ENCODE measurements at regions of chr11 and their contacts with region 1.

Region 1: DNA sequence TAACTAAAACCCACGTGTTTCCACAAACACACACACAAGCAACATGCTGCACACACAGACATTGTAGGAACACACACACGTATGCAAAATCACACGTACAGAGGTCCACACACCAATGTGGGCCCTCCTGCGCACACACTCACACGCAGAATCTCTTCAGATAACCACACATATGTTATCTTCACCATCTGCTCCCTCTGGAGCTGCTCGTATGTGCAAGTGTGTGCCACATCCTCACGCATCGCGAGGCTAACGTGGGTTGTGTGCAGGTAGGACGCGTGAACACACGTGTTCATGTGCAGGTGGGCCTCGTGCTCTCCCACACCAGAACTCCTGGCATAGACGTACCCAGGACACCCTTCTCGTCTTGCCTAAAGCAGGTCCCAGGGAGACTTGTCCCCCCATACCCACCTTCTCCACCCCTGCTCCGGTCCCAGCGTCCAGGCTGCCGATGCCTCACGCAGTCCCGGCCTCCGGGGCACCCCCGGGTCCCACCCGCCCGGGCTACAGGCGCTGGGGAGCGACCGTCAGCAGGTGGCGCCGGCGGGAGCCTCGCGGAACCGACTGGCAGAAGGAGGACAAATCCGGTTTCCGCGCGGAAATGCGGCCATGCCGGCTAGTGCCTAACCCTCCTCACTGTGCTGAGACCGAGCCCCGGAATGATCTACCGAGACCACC is 10.3 kb upstream of the IGSF9B start:
- DNase-seq: peak; percentile 49 to 71 (median 61)
- ATAC-seq: peak; percentile 77
- H3K4me3 ChIP-seq: peak overlapping the region; percentile 59
- H3K4me3 Mint-ChIP-seq: peak overlapping the region; percentile 81 to 93 (median 88)
- H3K27ac ChIP-seq: peak overlapping the region; percentile 36
- H3K27ac Mint-ChIP-seq: peak overlapping the region in 8 of 9 donors; percentile 20 to 93 (median 78)
- H3K4me1 ChIP-seq: no peaks in the 10 kb centered on the region
- H3K4me1 Mint-ChIP-seq: peaks cover 5 to 18% (median 13%) of the 10 kb centered on the region in 7 donors
- H3K27me3 ChIP-seq: no peaks in the 10 kb centered on the region
- H3K27me3 Mint-ChIP-seq: peaks cover 0 to 51% (median 5%) of the 10 kb centered on the region in 5 donors

Region 2: GRCh38 chr11:133956650-133957633 is 10.1 kb before region 1 on chr11 and contains the start of gene IGSF9B:
- CTCF ChIA-PET with region 1: no interaction called
- POLR2A ChIA-PET with region 1: no interaction called
- intact Hi-C with region 1: loop called in 1 of 2 experiments (anchors 1 kb)
- DNase-seq: peak; percentile 87 to 97 (median 92)
- ATAC-seq: peak; percentile 97
- H3K4me3 ChIP-seq: peak within 1 kb of the TSS; percentile 99
- H3K4me3 Mint-ChIP-seq: peak within 1 kb of the TSS; percentile 89 to 96 (median 92)
- H3K27ac ChIP-seq: peak within 1 kb of the TSS; percentile 75
- H3K27ac Mint-ChIP-seq: peak within 1 kb of the TSS; percentile 48 to 91 (median 88)
- H3K4me1 ChIP-seq: peaks cover 11 to 27% of the 10 kb centered on the region in 2 donors
- H3K4me1 Mint-ChIP-seq: peaks cover 29 to 52% (median 43%) of the 10 kb centered on the region in 7 donors
- H3K27me3 ChIP-seq: no peaks in the 10 kb centered on the region
- H3K27me3 Mint-ChIP-seq: peaks cover 7 to 24% (median 16%) of the 10 kb centered on the region in 5 donors
- total RNA-seq, gene IGSF9B: 17.6 to 155 (median 24.1) TPM

Region 3: GRCh38 chr11:134033696-134034491 is 66.8 kb after region 1 on chr11:
- CTCF ChIA-PET with region 1: interaction called, 4 read pairs
- POLR2A ChIA-PET with region 1: interaction called, 3 read pairs
- intact Hi-C with region 1: loop called in 1 of 2 experiments (anchors 1 kb)
- DNase-seq: peak in 8 of 9 donors; percentile 38 to 74 (median 60)
- ATAC-seq: peak; percentile 77
- H3K4me3 ChIP-seq: peak overlapping the region; percentile 25
- H3K4me3 Mint-ChIP-seq: peak overlapping the region; percentile 63 to 95 (median 75)
- H3K27ac ChIP-seq: peak overlapping the region; percentile 67
- H3K27ac Mint-ChIP-seq: peak overlapping the region; percentile 74 to 98 (median 85)
- H3K4me1 ChIP-seq: peaks cover 29 to 46% of the 10 kb centered on the region in 2 donors
- H3K4me1 Mint-ChIP-seq: peaks cover 33 to 79% (median 65%) of the 10 kb centered on the region in 7 donors
- H3K27me3 ChIP-seq: no peaks in the 10 kb centered on the region
- H3K27me3 Mint-ChIP-seq: peaks cover 0 to 24% (median 0%) of the 10 kb centered on the region in 5 donors

Region 4: DNA sequence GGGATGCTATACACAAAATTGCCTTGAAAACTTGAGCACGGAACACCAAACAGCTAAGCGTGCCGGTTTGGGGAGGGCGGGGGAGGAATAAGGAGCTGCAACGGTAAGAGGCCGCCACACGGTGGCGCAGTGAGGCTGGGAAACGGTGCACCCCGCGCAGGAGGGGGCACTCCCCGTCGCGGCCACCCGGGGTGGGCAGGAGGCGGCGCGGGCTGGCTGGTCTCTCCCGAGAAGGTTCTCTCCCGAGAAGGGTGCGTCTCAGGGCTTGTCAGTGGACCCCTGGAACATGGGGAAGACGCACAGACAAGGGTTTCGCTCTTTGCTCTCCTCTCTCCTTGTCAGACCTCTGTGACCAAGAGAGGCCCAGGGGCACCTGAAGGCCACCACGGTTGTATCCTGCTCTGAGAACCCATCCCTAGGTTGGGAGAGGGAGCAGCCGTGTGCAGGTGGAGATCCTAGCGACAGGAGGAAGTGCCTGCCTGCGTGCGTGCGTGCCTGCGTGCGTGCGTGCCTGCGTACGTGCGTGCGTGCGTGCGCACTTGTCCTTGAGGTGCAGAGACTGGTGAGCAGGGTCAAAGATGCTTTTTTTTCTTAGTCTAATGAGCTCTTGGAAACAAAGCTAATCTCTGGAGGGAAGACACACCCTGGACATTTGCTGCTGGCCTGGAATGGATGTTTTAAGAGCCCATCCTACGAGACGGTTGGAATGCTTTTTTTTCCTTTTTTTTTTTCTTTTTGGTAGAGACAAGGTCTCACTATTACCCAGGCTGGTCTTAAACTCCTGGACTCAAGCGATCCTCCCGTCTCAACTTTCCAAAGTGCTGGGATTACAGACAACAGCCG is 83.7 kb after region 1 on chr11:
- CTCF ChIA-PET with region 1: interaction called, 3 read pairs
- POLR2A ChIA-PET with region 1: no interaction called
- intact Hi-C with region 1: loop called (anchors 1 kb)
- DNase-seq: peak; percentile 60 to 82 (median 71)
- ATAC-seq: peak; percentile 96
- H3K4me3 ChIP-seq: no peak overlapping the region
- H3K4me3 Mint-ChIP-seq: peak overlapping the region in 5 of 10 donors; percentile 13 to 51 (median 48)
- H3K27ac ChIP-seq: no peak overlapping the region
- H3K27ac Mint-ChIP-seq: peak overlapping the region in 3 of 9 donors; percentile 44 to 86 (median 70)
- H3K4me1 ChIP-seq: peaks cover 4% of the 10 kb centered on the region in 2 donors
- H3K4me1 Mint-ChIP-seq: peaks cover 0 to 14% (median 5%) of the 10 kb centered on the region in 7 donors
- H3K27me3 ChIP-seq: peaks cover 0 to 3% of the 10 kb centered on the region in 2 donors
- H3K27me3 Mint-ChIP-seq: peaks cover 14 to 26% (median 21%) of the 10 kb centered on the region in 5 donors

Region 5: DNA sequence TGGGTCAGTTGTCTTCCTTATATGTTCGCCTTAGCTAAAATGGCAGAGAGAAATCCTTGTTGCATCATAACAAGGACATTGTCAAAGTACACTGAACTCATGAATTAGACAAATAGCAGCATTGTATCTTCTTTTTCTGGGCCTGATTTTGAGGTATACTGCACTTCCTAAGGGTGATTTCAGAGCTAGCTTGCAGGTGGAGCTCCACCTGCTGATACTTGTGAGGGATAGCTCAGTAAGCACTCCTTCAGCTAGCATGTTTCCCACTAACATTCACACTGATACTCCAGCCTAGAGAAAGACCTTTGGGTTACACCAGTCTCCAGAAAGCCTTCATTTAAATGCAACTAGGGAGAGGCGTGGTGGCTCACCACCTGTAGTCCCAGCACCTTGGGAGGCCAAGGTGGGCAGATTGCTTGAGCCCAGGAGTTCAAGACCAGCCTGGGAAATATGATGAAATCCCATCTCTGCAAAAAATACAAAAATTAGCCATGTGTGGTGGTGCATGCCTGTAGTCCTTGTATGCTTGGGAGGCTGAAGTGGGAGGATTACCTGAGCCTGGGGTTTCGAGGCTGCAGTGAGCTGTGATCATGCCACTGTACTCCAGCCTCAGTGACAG is 131.6 kb after region 1 on chr11:
- CTCF ChIA-PET with region 1: no interaction called
- POLR2A ChIA-PET with region 1: no interaction called
- intact Hi-C with region 1: loop called in 1 of 2 experiments (anchors 1 kb)
- DNase-seq: peak in 4 of 9 donors; percentile 4 to 15 (median 8)
- ATAC-seq: no peak
- H3K4me3 ChIP-seq: no peak overlapping the region
- H3K4me3 Mint-ChIP-seq: no peak overlapping the region
- H3K27ac ChIP-seq: no peak overlapping the region
- H3K27ac Mint-ChIP-seq: no peak overlapping the region
- H3K4me1 ChIP-seq: no peaks in the 10 kb centered on the region
- H3K4me1 Mint-ChIP-seq: peaks cover 0 to 8% (median 0%) of the 10 kb centered on the region in 7 donors
- H3K27me3 ChIP-seq: no peaks in the 10 kb centered on the region
- H3K27me3 Mint-ChIP-seq: peaks cover 0 to 11% (median 0%) of the 10 kb centered on the region in 5 donors

Region 6: GRCh38 chr11:134139873-134140331 is 172.8 kb after region 1 on chr11:
- CTCF ChIA-PET with region 1: no interaction called
- POLR2A ChIA-PET with region 1: no interaction called
- intact Hi-C with region 1: loop called (anchors 1 to 5 kb)
- DNase-seq: peak in 7 of 9 donors; percentile 15 to 55 (median 43)
- ATAC-seq: peak; percentile 72
- H3K4me3 ChIP-seq: no peak overlapping the region
- H3K4me3 Mint-ChIP-seq: no peak overlapping the region
- H3K27ac ChIP-seq: no peak overlapping the region
- H3K27ac Mint-ChIP-seq: no peak overlapping the region
- H3K4me1 ChIP-seq: no peaks in the 10 kb centered on the region
- H3K4me1 Mint-ChIP-seq: peaks cover 0 to 13% (median 3%) of the 10 kb centered on the region in 7 donors
- H3K27me3 ChIP-seq: no peaks in the 10 kb centered on the region
- H3K27me3 Mint-ChIP-seq: peaks cover 0 to under 1% (median 0%) of the 10 kb centered on the region in 5 donors